SK-N-SH (cell line): ENCODE measurements at regions of chr7 and their contacts with region 1.

Region 1: GRCh38 chr7:121994625-121995410 is 121.9 kb downstream of the PTPRZ1 start:
- DNase-seq: peak; percentile 56
- H3K4me3 ChIP-seq: no peak overlapping the region; a peak in 1 of 4 replicates
- H3K27ac ChIP-seq: no peak overlapping the region
- H3K4me1 ChIP-seq: no peaks in the 10 kb centered on the region; a peak in 1 of 4 replicates
- H3K27me3 ChIP-seq: peaks cover 24% of the 10 kb centered on the region; the same call in 1 of the 2 replicates
- CTCF ChIP-seq: peak; percentile 92
- EP300 ChIP-seq: no peak
- RAD21 ChIP-seq: peak; percentile 90

Region 2: DNA sequence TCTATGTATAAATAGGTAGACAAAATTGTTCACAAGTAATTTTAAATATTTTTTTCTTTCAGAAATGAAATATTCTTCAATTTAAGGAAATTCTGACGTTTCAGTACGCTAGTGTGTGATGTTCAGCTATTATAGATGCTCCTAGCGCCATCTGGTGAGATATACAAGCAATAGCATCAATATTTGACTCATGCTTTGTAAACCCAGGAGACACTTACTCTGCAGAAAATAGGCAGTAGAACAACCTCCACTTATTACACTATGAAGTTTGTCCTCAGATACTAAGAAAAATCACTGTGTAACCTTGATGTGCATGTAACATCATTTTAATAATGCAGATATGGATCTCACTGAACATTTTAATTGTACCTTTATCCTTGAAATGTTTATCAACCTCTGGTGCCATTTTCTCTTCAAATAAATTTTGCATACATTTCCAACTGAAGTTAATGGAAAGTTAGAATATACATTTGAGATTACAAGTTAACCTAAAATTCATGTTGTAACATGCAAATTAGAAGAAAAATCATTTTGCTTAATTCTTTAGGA is 447.2 kb before region 1 on chr7:
- CTCF ChIA-PET with region 1: interaction called, 10 read pairs
- POLR2A ChIA-PET with region 1: no interaction called
- DNase-seq: peak; percentile 51
- H3K4me3 ChIP-seq: no peak overlapping the region
- H3K27ac ChIP-seq: no peak overlapping the region
- H3K4me1 ChIP-seq: peaks cover 8 to 18% of the 10 kb centered on the region in 2 experiments; a peak in 2 of 4 replicates
- H3K27me3 ChIP-seq: no peaks in the 10 kb centered on the region
- CTCF ChIP-seq: peak; percentile 98
- EP300 ChIP-seq: no peak
- RAD21 ChIP-seq: peak; percentile 98

Region 3: DNA sequence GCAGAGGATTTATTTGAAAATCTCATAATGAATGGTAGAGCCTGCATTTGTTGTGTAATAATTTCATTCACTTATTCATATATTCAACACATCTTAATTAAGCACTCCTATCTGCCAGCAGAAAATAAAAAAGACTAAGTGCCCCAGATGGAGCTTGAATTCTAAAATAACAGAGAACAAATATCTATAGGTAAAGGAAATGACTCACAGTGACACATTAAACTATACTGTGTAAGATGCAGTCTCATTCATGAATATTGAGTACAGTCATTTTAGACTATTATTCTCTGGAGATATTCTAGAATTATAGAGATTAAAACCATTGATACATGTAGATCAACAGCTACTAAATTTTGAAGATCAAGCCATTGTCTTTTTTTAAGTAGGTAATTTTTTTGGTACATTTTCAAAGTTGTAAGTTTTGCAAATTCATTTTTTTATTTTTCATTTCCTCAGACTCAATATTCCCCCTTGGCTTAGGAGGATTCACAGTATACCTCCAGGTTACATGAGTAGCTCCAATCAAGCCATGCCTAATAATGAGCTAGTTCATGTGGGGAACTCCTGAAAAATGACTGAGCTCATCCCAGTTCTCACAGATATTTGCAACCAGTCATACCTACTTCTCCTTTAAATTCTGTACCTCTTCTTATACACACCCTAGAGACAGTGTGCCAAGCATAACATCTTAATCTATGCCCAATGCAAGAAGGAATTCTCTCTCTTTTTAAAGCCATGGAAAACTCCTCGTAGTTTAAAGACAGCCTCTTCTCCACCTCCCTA is 49.6 kb before region 1 on chr7:
- CTCF ChIA-PET with region 1: interaction called, 11 read pairs
- POLR2A ChIA-PET with region 1: no interaction called
- DNase-seq: no peak
- H3K4me3 ChIP-seq: no peak overlapping the region
- H3K27ac ChIP-seq: no peak overlapping the region
- H3K4me1 ChIP-seq: no peaks in the 10 kb centered on the region
- H3K27me3 ChIP-seq: no peaks in the 10 kb centered on the region
- CTCF ChIP-seq: no peak
- EP300 ChIP-seq: no peak
- RAD21 ChIP-seq: no peak

Region 4: DNA sequence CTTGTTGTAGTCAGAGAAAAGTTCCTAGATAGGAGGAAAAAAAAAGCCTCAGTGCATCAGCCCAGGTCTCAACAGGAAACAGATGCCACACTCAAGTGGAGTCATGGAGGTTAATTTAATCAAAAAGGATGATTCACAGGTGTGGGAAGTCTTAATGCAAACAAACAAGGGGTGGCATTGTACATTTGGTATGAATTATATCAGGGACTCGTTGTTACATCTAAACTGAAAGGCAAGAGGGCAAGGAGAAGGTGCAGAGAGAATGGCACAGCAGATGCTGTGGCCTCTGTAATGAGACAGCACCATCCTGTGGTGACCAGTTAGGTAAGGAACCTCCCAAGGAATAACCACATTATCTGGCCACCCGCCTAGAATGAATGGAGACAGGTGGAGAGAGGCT is 11.9 kb after region 1 on chr7:
- CTCF ChIA-PET with region 1: interaction called, 52 read pairs
- POLR2A ChIA-PET with region 1: no interaction called
- DNase-seq: no peak
- H3K4me3 ChIP-seq: no peak overlapping the region
- H3K27ac ChIP-seq: no peak overlapping the region
- H3K4me1 ChIP-seq: no peaks in the 10 kb centered on the region; a peak in 1 of 4 replicates
- H3K27me3 ChIP-seq: peaks cover 15% of the 10 kb centered on the region
- CTCF ChIP-seq: no peak
- EP300 ChIP-seq: no peak
- RAD21 ChIP-seq: no peak

Region 5: GRCh38 chr7:122033642-122034041 is 38.8 kb after region 1 on chr7:
- CTCF ChIA-PET with region 1: interaction called, 10 read pairs
- POLR2A ChIA-PET with region 1: no interaction called
- DNase-seq: no peak
- H3K4me3 ChIP-seq: no peak overlapping the region
- H3K27ac ChIP-seq: no peak overlapping the region
- H3K4me1 ChIP-seq: no peaks in the 10 kb centered on the region
- H3K27me3 ChIP-seq: peaks cover 11% of the 10 kb centered on the region
- CTCF ChIP-seq: no peak
- EP300 ChIP-seq: no peak
- RAD21 ChIP-seq: no peak

Region 6: DNA sequence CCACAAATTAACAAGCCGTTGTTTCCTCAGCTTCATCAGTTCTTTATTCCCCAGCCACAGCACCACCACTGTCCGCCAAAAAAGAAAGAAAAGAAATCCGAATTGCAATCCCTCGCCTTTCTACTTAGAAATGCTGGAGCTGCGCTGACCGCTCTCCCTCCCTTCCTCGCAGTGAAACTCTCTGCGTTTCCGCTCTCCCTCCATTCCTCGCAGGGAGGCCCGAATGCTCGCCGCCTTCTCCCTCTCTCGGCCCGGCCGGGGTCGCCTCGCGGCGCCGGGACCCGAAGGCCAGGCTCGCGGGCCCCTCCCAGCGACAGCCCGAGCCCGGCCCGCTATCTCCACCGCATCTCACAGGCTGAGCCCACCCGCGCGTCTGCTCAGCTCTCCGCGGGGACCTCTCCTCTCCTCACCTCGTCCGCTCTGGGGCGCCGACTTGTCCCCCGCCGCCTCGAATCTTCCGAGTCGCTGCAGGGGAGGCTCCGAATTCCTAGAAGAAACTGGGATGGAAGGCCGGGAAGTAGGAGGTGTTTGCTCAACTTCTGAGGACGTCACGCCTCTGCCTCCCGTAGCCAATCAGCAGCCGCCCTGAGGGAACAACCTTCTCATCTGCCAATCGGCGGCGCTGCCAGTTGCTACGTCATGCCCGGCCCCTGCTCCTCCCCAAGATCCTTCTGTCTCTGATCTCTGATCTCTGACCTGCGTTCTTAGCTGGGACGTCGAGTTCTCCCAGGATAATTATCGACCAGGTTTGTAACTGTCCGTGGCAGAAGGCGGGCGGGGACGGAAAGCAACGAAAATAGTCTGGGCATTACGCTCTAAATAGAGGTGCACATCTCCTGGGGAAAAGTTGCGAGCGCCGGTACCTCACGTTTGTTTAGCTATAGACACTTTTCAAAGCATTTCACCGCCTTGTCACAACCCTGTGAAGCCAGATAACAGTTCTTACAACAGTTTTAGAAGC is 149.2 kb after region 1 on chr7 and contains the start of gene AASS:
- CTCF ChIA-PET with region 1: no interaction called
- POLR2A ChIA-PET with region 1: no interaction called
- DNase-seq: peak; percentile 91
- H3K4me3 ChIP-seq: peak within 1 kb of the TSS; percentile 74 to 94
- H3K27ac ChIP-seq: peak within 1 kb of the TSS in 1 of 2 experiments; percentile 34; a peak in 1 of 4 replicates
- H3K4me1 ChIP-seq: peaks cover 0 to 11% of the 10 kb centered on the region in 2 experiments; a peak in 1 of 4 replicates
- H3K27me3 ChIP-seq: peaks cover 20% of the 10 kb centered on the region; the same call in 1 of the 2 replicates
- CTCF ChIP-seq: peak; percentile 26
- EP300 ChIP-seq: no peak
- RAD21 ChIP-seq: no peak
- polyA plus RNA-seq, gene AASS: 0.92 and 1.2 TPM in 2 replicates

Region 7: GRCh38 chr7:122273117-122273516 is 278.3 kb after region 1 on chr7:
- CTCF ChIA-PET with region 1: no interaction called
- POLR2A ChIA-PET with region 1: no interaction called
- DNase-seq: no peak
- H3K4me3 ChIP-seq: no peak overlapping the region
- H3K27ac ChIP-seq: no peak overlapping the region
- H3K4me1 ChIP-seq: no peaks in the 10 kb centered on the region
- H3K27me3 ChIP-seq: no peaks in the 10 kb centered on the region
- CTCF ChIP-seq: no peak
- EP300 ChIP-seq: no peak
- RAD21 ChIP-seq: no peak

Region 8: DNA sequence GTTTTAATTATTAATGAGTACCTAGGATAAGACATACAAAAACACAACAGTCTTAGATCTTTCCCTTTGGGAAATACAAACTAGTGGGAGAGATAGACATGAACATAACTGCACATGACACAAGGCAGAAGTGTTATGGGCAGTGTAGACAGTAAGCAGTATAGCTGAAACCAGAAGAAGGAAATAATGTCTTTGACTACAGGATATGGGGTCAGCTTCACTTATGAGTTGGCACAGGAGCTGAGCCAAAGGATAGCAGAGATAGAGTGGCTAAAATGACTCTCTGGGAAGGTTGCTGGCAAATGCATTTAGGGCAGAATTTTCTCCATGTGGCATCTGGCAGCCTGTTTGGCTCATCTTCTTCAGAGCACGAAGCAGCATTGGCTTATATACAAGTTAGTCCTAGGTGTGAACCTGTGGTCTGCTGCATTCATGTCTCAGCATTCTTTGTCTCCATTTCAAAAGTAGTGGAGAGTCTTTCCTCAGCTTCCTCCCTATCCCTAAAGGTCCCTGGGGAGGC is 370.0 kb after region 1 on chr7:
- CTCF ChIA-PET with region 1: no interaction called
- POLR2A ChIA-PET with region 1: no interaction called
- DNase-seq: no peak
- H3K4me3 ChIP-seq: no peak overlapping the region
- H3K27ac ChIP-seq: no peak overlapping the region
- H3K4me1 ChIP-seq: no peaks in the 10 kb centered on the region
- H3K27me3 ChIP-seq: no peaks in the 10 kb centered on the region
- CTCF ChIP-seq: no peak
- EP300 ChIP-seq: no peak
- RAD21 ChIP-seq: no peak